ENCODE measurements at regions of chr1 and their contacts with region 1.

Region 1: GRCh38 chr1:175208773-175209492 is 16.4 kb upstream of the KIAA0040 start:
- DNase-seq: peak; percentile 91
- H3K4me3 ChIP-seq: peak overlapping the region; percentile 50
- H3K27ac ChIP-seq: peak overlapping the region; percentile 97
- H3K4me1 ChIP-seq: peaks cover 69% of the 10 kb centered on the region
- CTCF ChIP-seq: peak; percentile 49

Region 2: GRCh38 chr1:175225805-175226129 is 16.8 kb after region 1 on chr1:
- CTCF ChIA-PET with region 1: interaction called, 3 read pairs
- POLR2A ChIA-PET with region 1: interaction called, 23 read pairs
- intact Hi-C with region 1: loop called (anchors 1 kb)
- DNase-seq: no peak
- H3K4me3 ChIP-seq: peak overlapping the region; percentile 59
- H3K27ac ChIP-seq: peak overlapping the region; percentile 95
- H3K4me1 ChIP-seq: peaks cover 96% of the 10 kb centered on the region
- CTCF ChIP-seq: peak; percentile 79

Region 3: GRCh38 chr1:175307160-175307559 is 98.2 kb after region 1 on chr1:
- CTCF ChIA-PET with region 1: no interaction called
- POLR2A ChIA-PET with region 1: interaction called, 7 read pairs
- intact Hi-C with region 1: loop called (anchors 1 kb)
- DNase-seq: peak; percentile 89
- H3K4me3 ChIP-seq: peak overlapping the region; percentile 30
- H3K27ac ChIP-seq: peak overlapping the region; percentile 85
- H3K4me1 ChIP-seq: peaks cover 56% of the 10 kb centered on the region
- CTCF ChIP-seq: no peak

Measured in OCI-LY7 (cell line).